ENCODE measurements at regions of chr6 and their contacts with region 1.

Region 1: DNA sequence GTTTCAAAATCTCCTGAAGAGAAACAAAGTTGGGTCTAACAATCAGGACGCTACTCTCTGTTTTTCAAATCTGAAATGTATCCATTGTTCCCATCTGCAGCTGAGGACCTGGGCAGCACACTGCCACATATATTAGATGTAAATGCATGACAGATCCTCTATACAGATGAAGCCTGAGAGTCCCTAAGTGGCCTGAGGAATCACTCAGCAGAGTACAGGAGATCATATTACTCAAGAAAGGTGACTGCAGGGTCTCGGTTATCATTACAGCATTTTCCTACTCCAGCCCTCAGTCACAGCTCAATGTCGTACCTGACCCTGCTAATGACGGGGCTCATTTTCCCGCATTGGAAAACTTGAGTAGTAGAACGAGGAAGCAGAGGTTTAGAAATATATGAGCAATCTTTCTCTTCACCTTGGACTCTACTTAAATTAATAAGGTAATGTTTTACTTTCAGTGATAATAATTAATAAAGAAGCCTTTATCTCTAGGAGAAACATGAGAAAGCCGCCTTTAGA is 256.2 kb upstream of the IRAK1BP1 start:
- DNase-seq: no peak
- H3K4me3 ChIP-seq: no peak overlapping the region
- CTCF ChIP-seq: no peak

Region 2: GRCh38 chr6:78598966-78599365 is 12.2 kb before region 1 on chr6:
- CTCF ChIA-PET with region 1: interaction called, 19 read pairs
- POLR2A ChIA-PET with region 1: interaction called, 4 read pairs
- DNase-seq: peak; percentile 88
- H3K4me3 ChIP-seq: no peak overlapping the region
- CTCF ChIP-seq: no peak